ENCODE measurements at regions of chr16 and their contacts with region 1.

Region 1: GRCh38 chr16:84103678-84104077 is 13.1 kb downstream of the MBTPS1 start:
- DNase-seq: no peak
- H3K4me3 ChIP-seq: no peak overlapping the region
- CTCF ChIP-seq: no peak

Region 2: GRCh38 chr16:84116720-84117493 is 13.2 kb after region 1 on chr16 and contains the start of gene MBTPS1:
- CTCF ChIA-PET with region 1: interaction called, 20 read pairs
- POLR2A ChIA-PET with region 1: interaction called, 3 read pairs
- DNase-seq: peak; percentile 73
- H3K4me3 ChIP-seq: peak within 1 kb of the TSS; percentile 98
- CTCF ChIP-seq: no peak